Heart right ventricle (tissue), 16 donors: ENCODE measurements at regions of chr11 and their contacts with region 1.

Region 1: GRCh38 chr11:3834664-3835461 is 5.9 kb downstream of the RHOG start:
- DNase-seq: peak in 1 of 2 donors; percentile 61
- ATAC-seq: peak in 5 of 8 donors; percentile 9 to 33 (median 15)
- H3K4me3 ChIP-seq: peak overlapping the region in 1 of 10 donors; percentile 97
- H3K27ac ChIP-seq: peak overlapping the region in 8 of 10 donors; percentile 16 to 100 (median 60)
- H3K4me1 ChIP-seq: peaks cover 34 to 99% (median 78%) of the 10 kb centered on the region in 9 donors
- H3K27me3 ChIP-seq: no peaks in the 10 kb centered on the region
- CTCF ChIP-seq: no peak

Region 2: GRCh38 chr11:3797329-3798095 is 37.4 kb before region 1 on chr11 and contains the start of gene NUP98:
- intact Hi-C with region 1: loop called in 4 of 10 experiments (anchors 5 kb)
- DNase-seq: peak; percentile 99 to 100
- ATAC-seq: peak; percentile 95 to 98 (median 97)
- H3K4me3 ChIP-seq: peak within 1 kb of the TSS; percentile 71 to 99 (median 93)
- H3K27ac ChIP-seq: peak within 1 kb of the TSS; percentile 91 to 100 (median 96)
- H3K4me1 ChIP-seq: peaks cover 4 to 37% (median 33%) of the 10 kb centered on the region in 9 donors
- H3K27me3 ChIP-seq: no peaks in the 10 kb centered on the region
- CTCF ChIP-seq: peak in 1 of 9 donors; percentile 0
- total RNA-seq, gene NUP98: 34.8 to 65.5 (median 48.1) TPM

Region 3: GRCh38 chr11:4187055-4187988 is 352.5 kb after region 1 on chr11:
- intact Hi-C with region 1: no loop called
- DNase-seq: peak; percentile 89 to 93
- ATAC-seq: peak; percentile 83 to 94 (median 89)
- H3K4me3 ChIP-seq: peak overlapping the region; percentile 36 to 70 (median 64)
- H3K27ac ChIP-seq: peak overlapping the region in 8 of 10 donors; percentile 7 to 66 (median 38)
- H3K4me1 ChIP-seq: peaks cover 0 to 20% (median 5%) of the 10 kb centered on the region in 9 donors
- H3K27me3 ChIP-seq: no peaks in the 10 kb centered on the region
- CTCF ChIP-seq: peak; percentile 94 to 98 (median 96)

Region 4: DNA sequence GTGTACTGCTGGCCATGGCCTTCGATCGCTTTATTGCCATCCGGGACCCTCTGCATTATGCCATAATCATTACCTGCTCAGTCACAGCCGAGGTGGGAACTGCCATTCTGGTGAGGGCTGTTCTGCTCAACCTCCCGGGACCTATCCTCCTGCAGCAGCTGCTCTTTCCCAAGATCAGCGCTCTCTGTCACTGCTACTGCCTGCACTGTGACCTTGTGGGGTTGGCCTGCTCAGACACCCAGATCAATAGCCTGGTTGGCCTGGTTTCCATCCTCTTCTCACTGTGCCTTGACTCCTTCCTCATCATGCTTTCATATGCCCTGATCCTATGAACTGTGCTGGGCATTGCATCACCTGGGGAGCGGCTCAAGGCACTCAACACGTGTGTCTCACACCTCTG is 583.5 kb after region 1 on chr11:
- intact Hi-C with region 1: no loop called
- DNase-seq: no peak
- ATAC-seq: no peak
- H3K4me3 ChIP-seq: no peak overlapping the region
- H3K27ac ChIP-seq: no peak overlapping the region
- H3K4me1 ChIP-seq: no peaks in the 10 kb centered on the region
- H3K27me3 ChIP-seq: no peaks in the 10 kb centered on the region
- CTCF ChIP-seq: no peak